Tibial artery (tissue), 4 donors: ENCODE measurements at regions of chr18 and their contacts with region 1.

Region 1: DNA sequence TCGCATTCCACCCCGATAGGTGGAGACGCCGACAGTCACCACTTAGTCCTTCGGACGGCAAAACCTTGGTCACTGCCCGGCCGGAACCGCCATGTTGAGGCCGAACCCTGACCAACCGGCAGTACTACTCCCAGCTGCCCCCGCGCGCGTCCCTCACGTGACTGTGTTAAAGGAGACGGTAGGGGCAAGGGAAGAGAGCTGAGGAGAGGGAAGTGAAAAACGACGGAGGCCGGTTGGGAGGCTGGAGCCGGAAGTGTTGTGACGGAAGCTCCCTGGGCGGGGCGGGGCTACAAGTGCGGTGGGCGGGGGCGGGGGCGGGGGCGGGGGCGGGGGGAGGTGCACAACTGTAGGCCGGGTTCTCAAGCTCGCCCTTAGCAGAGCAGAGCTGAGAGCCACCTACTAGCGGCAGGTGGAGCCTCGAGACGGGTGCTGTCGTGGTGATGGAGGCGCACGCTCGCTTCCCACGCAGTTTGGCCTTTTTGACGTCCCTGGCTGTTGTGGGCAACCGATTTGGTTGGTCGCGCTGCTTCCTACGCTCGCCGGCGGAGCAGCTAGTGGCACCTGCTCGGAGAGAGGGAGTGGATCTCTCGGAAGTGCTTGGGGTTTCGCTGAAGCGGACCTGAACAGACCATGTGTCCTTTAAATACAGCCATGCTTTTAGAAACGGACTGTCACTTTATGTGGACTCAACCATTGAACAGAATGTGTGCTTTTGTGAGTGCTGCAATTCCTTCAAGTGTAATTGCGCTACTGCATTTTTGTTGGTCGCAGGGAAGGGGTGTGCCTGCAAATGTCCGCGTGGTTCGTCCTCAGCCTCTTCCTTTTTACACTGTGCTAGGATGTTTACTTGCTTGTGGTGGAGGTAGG is at the start of gene TRAPPC8:
- DNase-seq: peak; percentile 99
- H3K4me3 ChIP-seq: peak within 1 kb of the TSS; percentile 70 to 87
- H3K27ac ChIP-seq: peak within 1 kb of the TSS; percentile 88 to 92
- H3K4me1 ChIP-seq: peaks cover 0 to 46% (median 30%) of the 10 kb centered on the region in 4 donors
- H3K27me3 ChIP-seq: no peaks in the 10 kb centered on the region
- CTCF ChIP-seq: no peak

Region 2: GRCh38 chr18:32092422-32093101 is 149.3 kb after region 1 on chr18:
- intact Hi-C with region 1: loop called (anchors 1 kb)
- DNase-seq: peak; percentile 98 to 100
- H3K4me3 ChIP-seq: peak overlapping the region; percentile 86 to 90
- H3K27ac ChIP-seq: peak overlapping the region; percentile 100
- H3K4me1 ChIP-seq: peaks cover 0 to 30% (median 19%) of the 10 kb centered on the region in 4 donors
- H3K27me3 ChIP-seq: no peaks in the 10 kb centered on the region
- CTCF ChIP-seq: no peak